ENCODE measurements at regions of chrX and their contacts with region 1.

Region 1: DNA sequence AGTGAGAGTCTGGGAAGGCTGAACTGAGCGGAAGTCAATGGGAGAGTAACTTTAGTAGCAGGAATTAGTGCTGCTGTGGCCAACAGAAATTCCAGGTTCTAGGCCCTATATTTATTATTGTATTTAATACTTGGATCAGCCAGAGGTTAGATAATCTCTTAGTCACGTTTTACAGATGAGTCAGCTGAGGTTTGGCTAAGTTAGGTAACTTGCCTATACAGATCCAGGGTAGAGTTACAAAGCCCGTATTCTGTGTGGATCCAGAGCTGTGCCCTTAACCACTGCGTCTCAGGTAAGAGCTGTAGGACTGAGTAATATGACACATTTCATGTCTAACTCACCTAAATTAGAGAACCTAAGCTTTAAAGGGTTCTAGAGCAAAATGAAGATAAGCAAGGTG is 20.5 kb downstream of the PSMD10 start:
- DNase-seq: no peak
- ATAC-seq: no peak
- H3K4me3 ChIP-seq: no peak overlapping the region
- H3K4me3 Mint-ChIP-seq: no peak overlapping the region
- H3K27ac ChIP-seq: no peak overlapping the region
- H3K27ac Mint-ChIP-seq: no peak overlapping the region
- H3K4me1 ChIP-seq: no peaks in the 10 kb centered on the region
- H3K4me1 Mint-ChIP-seq: peaks cover 5% of the 10 kb centered on the region
- H3K27me3 ChIP-seq: no peaks in the 10 kb centered on the region
- H3K27me3 Mint-ChIP-seq: no peaks in the 10 kb centered on the region
- CTCF ChIP-seq: no peak

Region 2: GRCh38 chrX:106481341-106481740 is 1589.5 kb before region 1 on chrX:
- CTCF ChIA-PET with region 1: no interaction called
- POLR2A ChIA-PET with region 1: no interaction called
- intact Hi-C with region 1: loop called (anchors 10 kb)
- DNase-seq: peak; percentile 49
- ATAC-seq: no peak
- H3K4me3 ChIP-seq: no peak overlapping the region
- H3K4me3 Mint-ChIP-seq: no peak overlapping the region
- H3K27ac ChIP-seq: no peak overlapping the region
- H3K27ac Mint-ChIP-seq: no peak overlapping the region
- H3K4me1 ChIP-seq: peaks cover 0 to 8% of the 10 kb centered on the region in 2 donors
- H3K4me1 Mint-ChIP-seq: peaks cover 16% of the 10 kb centered on the region
- H3K27me3 ChIP-seq: no peaks in the 10 kb centered on the region
- H3K27me3 Mint-ChIP-seq: no peaks in the 10 kb centered on the region
- CTCF ChIP-seq: peak; percentile 76

Region 3: DNA sequence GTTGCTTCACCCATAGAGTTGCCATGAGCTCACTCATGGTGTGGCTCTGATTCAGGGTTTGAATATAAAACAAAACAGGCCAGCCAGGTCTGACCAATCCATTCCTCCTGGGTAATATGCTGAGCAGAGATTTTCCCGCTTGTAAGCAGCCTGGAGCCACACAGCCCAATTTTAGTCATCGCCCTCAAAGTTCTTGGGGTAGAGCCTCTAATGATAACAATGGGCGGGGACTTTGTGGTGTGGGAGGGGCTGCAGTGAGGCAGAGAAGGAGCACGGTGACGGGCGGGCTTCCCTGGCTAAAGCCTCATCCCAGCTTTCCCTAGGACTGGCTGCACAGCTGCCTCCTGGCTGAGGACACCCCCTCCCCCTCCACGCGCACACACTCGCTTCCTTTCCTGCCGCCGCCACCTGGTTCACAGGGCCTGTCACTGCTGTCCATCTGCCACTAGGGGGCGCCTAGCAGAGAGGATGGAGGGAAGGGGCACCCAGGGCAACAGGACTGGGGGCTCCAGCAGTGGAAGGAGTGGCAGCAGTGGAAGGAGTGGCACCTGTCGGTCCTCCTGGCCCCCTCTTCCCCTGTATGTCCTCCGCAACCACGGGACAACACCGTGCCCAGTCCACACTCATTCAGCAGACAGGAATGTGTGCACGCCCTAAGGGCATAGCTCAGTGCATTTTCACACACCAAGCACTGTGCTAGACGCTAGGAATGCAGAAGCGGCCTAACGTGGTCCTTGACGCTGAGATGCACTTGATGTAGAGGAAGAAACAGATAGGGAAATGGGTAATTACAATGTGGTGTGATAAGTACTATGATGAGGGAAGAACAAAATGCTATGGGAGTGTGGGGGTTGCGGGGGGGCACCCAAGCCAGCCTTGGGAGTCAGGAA is 415.8 kb before region 1 on chrX:
- CTCF ChIA-PET with region 1: interaction called, 5 read pairs
- POLR2A ChIA-PET with region 1: no interaction called
- intact Hi-C with region 1: loop called (anchors 5 kb)
- DNase-seq: peak; percentile 74
- ATAC-seq: peak; percentile 85
- H3K4me3 ChIP-seq: no peak overlapping the region
- H3K4me3 Mint-ChIP-seq: no peak overlapping the region
- H3K27ac ChIP-seq: no peak overlapping the region
- H3K27ac Mint-ChIP-seq: peak overlapping the region; percentile 26
- H3K4me1 ChIP-seq: peaks cover 7% of the 10 kb centered on the region in 2 donors
- H3K4me1 Mint-ChIP-seq: peaks cover 9% of the 10 kb centered on the region
- H3K27me3 ChIP-seq: no peaks in the 10 kb centered on the region
- H3K27me3 Mint-ChIP-seq: no peaks in the 10 kb centered on the region
- CTCF ChIP-seq: peak; percentile 78

Region 4: DNA sequence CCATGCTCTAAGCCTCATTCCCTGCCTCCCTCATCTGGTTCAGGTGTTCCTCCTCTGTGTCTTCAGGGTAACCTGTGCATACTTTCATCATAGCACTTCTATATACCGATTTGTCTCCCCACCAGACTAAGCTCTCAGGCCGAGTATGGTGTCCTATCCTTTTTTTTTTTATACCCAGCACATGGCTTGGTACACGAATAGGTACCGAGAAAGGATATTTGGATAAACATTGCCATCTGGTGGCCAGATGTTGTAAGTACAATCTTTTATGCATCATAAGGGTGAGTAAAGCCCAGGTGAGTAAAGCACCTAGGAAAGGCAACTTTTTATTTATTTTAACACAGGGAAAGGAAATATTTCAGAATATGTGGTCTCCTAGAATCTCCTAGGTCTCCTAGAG is 176.9 kb before region 1 on chrX:
- CTCF ChIA-PET with region 1: interaction called, 3 read pairs
- POLR2A ChIA-PET with region 1: no interaction called
- intact Hi-C with region 1: loop called (anchors 5 kb)
- DNase-seq: peak; percentile 59
- ATAC-seq: no peak
- H3K4me3 ChIP-seq: no peak overlapping the region
- H3K4me3 Mint-ChIP-seq: no peak overlapping the region
- H3K27ac ChIP-seq: no peak overlapping the region
- H3K27ac Mint-ChIP-seq: no peak overlapping the region
- H3K4me1 ChIP-seq: no peaks in the 10 kb centered on the region
- H3K4me1 Mint-ChIP-seq: no peaks in the 10 kb centered on the region
- H3K27me3 ChIP-seq: no peaks in the 10 kb centered on the region
- H3K27me3 Mint-ChIP-seq: peaks cover 11% of the 10 kb centered on the region
- CTCF ChIP-seq: peak; percentile 73

Region 5: GRCh38 chrX:107985032-107985431 is 85.9 kb before region 1 on chrX:
- CTCF ChIA-PET with region 1: no interaction called
- POLR2A ChIA-PET with region 1: no interaction called
- intact Hi-C with region 1: no loop called
- DNase-seq: no peak
- ATAC-seq: no peak
- H3K4me3 ChIP-seq: no peak overlapping the region
- H3K4me3 Mint-ChIP-seq: no peak overlapping the region
- H3K27ac ChIP-seq: no peak overlapping the region
- H3K27ac Mint-ChIP-seq: no peak overlapping the region
- H3K4me1 ChIP-seq: no peaks in the 10 kb centered on the region
- H3K4me1 Mint-ChIP-seq: no peaks in the 10 kb centered on the region
- H3K27me3 ChIP-seq: no peaks in the 10 kb centered on the region
- H3K27me3 Mint-ChIP-seq: no peaks in the 10 kb centered on the region
- CTCF ChIP-seq: no peak

Region 6: GRCh38 chrX:108020631-108021030 is 50.3 kb before region 1 on chrX:
- CTCF ChIA-PET with region 1: interaction called, 5 read pairs
- POLR2A ChIA-PET with region 1: no interaction called
- intact Hi-C with region 1: loop called (anchors 1 kb)
- DNase-seq: peak; percentile 30
- ATAC-seq: peak; percentile 24
- H3K4me3 ChIP-seq: no peak overlapping the region
- H3K4me3 Mint-ChIP-seq: peak overlapping the region; percentile 80
- H3K27ac ChIP-seq: no peak overlapping the region
- H3K27ac Mint-ChIP-seq: peak overlapping the region; percentile 59
- H3K4me1 ChIP-seq: peaks cover 4 to 23% of the 10 kb centered on the region in 2 donors
- H3K4me1 Mint-ChIP-seq: peaks cover 30% of the 10 kb centered on the region
- H3K27me3 ChIP-seq: no peaks in the 10 kb centered on the region
- H3K27me3 Mint-ChIP-seq: no peaks in the 10 kb centered on the region
- CTCF ChIP-seq: peak; percentile 27

Region 7: DNA sequence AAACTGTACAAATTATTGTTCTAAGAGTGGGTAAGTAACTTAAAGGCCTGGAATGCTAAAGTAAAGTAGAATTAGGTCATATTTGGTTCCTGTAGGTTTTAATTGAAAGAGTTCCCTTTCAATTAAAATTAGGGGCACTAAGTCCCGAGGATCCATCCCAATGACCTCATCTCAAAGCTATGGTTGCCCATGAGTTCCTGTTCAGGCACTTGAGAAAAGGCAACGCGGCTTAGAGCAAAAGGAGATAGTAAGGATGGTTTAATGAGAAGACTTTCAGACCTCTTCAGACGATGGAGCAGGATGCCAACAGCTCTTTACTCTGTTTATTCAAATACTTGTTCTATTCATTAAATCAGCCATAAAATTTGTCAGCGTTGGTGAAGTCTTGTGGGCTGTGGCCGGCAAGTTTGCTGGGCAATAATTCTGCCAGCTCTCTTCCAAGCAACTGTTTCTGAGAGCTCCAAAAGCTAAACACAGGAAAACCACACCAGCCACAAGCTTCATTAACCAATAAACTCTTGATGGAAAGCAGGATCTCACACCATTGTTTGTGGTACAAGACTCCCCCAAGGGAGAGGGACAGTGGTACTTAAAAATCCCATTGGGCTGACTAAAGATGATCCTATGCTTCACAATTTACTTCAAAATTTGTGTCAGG is 200.0 kb after region 1 on chrX:
- CTCF ChIA-PET with region 1: no interaction called
- POLR2A ChIA-PET with region 1: no interaction called
- intact Hi-C with region 1: no loop called
- DNase-seq: no peak
- ATAC-seq: no peak
- H3K4me3 ChIP-seq: no peak overlapping the region
- H3K4me3 Mint-ChIP-seq: no peak overlapping the region
- H3K27ac ChIP-seq: no peak overlapping the region
- H3K27ac Mint-ChIP-seq: no peak overlapping the region
- H3K4me1 ChIP-seq: no peaks in the 10 kb centered on the region
- H3K4me1 Mint-ChIP-seq: no peaks in the 10 kb centered on the region
- H3K27me3 ChIP-seq: peaks cover 0 to 7% (median 0%) of the 10 kb centered on the region in 4 experiments
- H3K27me3 Mint-ChIP-seq: peaks cover under 1% of the 10 kb centered on the region
- CTCF ChIP-seq: no peak